Mammary epithelial cell (primary cell): ENCODE measurements at regions of chr22 and their contacts with region 1.

Region 1: GRCh38 chr22:39520054-39520891 is at the start of gene ATF4:
- DNase-seq: peak; percentile 99
- H3K4me3 ChIP-seq: peak within 1 kb of the TSS; percentile 77 to 96 (median 93)
- H3K27ac ChIP-seq: peak within 1 kb of the TSS; percentile 82
- H3K4me1 ChIP-seq: peaks cover 16% of the 10 kb centered on the region
- H3K27me3 ChIP-seq: no peaks in the 10 kb centered on the region
- CTCF ChIP-seq: no peak
- total RNA-seq, gene ATF4: 598 to 653 TPM

Region 2: GRCh38 chr22:39152511-39153219 is 367.6 kb before region 1 on chr22 and contains the start of gene CBX7:
- CTCF ChIA-PET with region 1: no interaction called
- dilution Hi-C with region 1: no loop called
- in situ Hi-C with region 1: loop called (anchors 25 kb)
- intact Hi-C with region 1: no loop called
- DNase-seq: peak; percentile 80
- H3K4me3 ChIP-seq: peak within 1 kb of the TSS; percentile 57 to 69 (median 63)
- H3K27ac ChIP-seq: no peak within 1 kb of the TSS
- H3K4me1 ChIP-seq: peaks cover 11% of the 10 kb centered on the region
- H3K27me3 ChIP-seq: peaks cover 6% of the 10 kb centered on the region
- CTCF ChIP-seq: no peak
- total RNA-seq, gene CBX7: 3.2 to 4.3 TPM

Region 3: GRCh38 chr22:39343259-39344048 is 176.8 kb before region 1 on chr22:
- CTCF ChIA-PET with region 1: interaction called, 3 read pairs
- dilution Hi-C with region 1: no loop called
- in situ Hi-C with region 1: no loop called
- intact Hi-C with region 1: loop called (anchors 2 kb)
- DNase-seq: peak; percentile 42
- H3K4me3 ChIP-seq: no peak overlapping the region
- H3K27ac ChIP-seq: no peak overlapping the region
- H3K4me1 ChIP-seq: no peaks in the 10 kb centered on the region
- H3K27me3 ChIP-seq: no peaks in the 10 kb centered on the region
- CTCF ChIP-seq: peak; percentile 86 to 87

Region 4: GRCh38 chr22:39422101-39422500 is 98.2 kb before region 1 on chr22:
- CTCF ChIA-PET with region 1: no interaction called
- dilution Hi-C with region 1: loop called (anchors 5 kb)
- in situ Hi-C with region 1: no loop called
- intact Hi-C with region 1: no loop called
- DNase-seq: no peak
- H3K4me3 ChIP-seq: no peak overlapping the region
- H3K27ac ChIP-seq: no peak overlapping the region
- H3K4me1 ChIP-seq: no peaks in the 10 kb centered on the region
- H3K27me3 ChIP-seq: no peaks in the 10 kb centered on the region
- CTCF ChIP-seq: no peak

Region 5: GRCh38 chr22:39502109-39502788 is 18.0 kb before region 1 on chr22 and contains the start of gene MIEF1:
- CTCF ChIA-PET with region 1: interaction called, 7 read pairs
- dilution Hi-C with region 1: no loop called
- in situ Hi-C with region 1: no loop called
- intact Hi-C with region 1: loop called (anchors 2 kb)
- DNase-seq: peak; percentile 91
- H3K4me3 ChIP-seq: peak within 1 kb of the TSS; percentile 67 to 86 (median 79)
- H3K27ac ChIP-seq: peak within 1 kb of the TSS; percentile 58
- H3K4me1 ChIP-seq: peaks cover 11% of the 10 kb centered on the region
- H3K27me3 ChIP-seq: no peaks in the 10 kb centered on the region
- CTCF ChIP-seq: no peak
- total RNA-seq, gene MIEF1: 36.8 to 36.9 TPM